Aorta (tissue), 5 donors: ENCODE measurements at regions of chr15 and their contacts with region 1.

Region 1: DNA sequence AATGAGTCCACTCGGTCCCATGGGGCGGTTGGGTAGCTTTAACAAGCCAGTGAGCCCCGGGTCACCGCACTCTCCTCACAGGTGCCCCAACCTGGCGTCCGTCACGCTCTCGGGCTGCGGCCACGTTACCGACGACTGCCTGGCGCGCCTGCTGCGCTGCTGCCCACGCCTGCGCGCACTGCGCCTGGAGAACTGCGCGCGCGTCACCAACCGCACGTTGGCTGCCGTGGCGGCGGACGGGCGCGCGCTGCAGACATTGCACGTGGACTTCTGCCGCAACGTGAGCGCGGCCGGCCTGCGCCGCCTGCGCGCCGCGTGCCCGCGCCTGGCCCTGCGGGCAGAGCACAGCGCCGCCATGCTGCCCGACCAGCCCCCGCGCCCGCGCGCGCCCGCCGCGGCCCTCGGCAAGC is 3.4 kb downstream of the FBXL22 start:
- DNase-seq: peak; percentile 95 to 96
- ATAC-seq: peak; percentile 81
- H3K4me3 ChIP-seq: peak overlapping the region; percentile 43 to 57
- H3K27ac ChIP-seq: peak overlapping the region; percentile 19 to 87
- H3K4me1 ChIP-seq: peaks cover 1 to 3% of the 10 kb centered on the region in 2 donors
- H3K27me3 ChIP-seq: no peaks in the 10 kb centered on the region

Region 2: DNA sequence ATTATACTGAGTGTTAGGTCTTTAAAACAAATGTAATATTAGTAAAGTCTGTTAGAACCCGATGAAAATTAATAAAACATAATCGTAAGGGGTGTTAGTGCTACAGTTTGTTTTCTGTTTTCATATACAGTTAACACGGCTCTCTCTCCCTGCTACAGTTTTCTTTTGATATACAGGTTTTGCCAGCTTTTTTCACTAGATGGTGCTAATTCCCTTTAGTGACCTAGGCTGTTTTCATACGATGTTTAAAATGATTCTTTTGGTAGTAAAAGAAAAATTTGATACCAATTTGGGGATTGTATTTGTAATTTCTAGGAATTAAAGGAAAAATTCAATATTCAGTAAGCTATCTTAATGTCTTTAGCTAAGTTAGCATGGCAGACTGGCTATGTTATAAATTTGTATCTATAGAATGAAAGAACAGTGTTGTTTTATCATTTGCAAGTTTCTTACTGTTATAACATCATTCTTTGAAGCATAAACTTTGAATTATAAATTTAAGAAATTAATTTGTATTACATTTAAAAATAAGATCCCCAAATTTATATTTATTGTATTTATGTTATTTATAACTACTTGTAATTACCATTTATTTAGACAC is 311.7 kb before region 1 on chr15:
- intact Hi-C with region 1: loop called in 1 of 2 experiments (anchors 5 kb)
- DNase-seq: no peak
- ATAC-seq: peak; percentile 86
- H3K4me3 ChIP-seq: no peak overlapping the region
- H3K27ac ChIP-seq: no peak overlapping the region
- H3K4me1 ChIP-seq: peaks cover 5 to 6% of the 10 kb centered on the region in 2 donors
- H3K27me3 ChIP-seq: no peaks in the 10 kb centered on the region

Region 3: DNA sequence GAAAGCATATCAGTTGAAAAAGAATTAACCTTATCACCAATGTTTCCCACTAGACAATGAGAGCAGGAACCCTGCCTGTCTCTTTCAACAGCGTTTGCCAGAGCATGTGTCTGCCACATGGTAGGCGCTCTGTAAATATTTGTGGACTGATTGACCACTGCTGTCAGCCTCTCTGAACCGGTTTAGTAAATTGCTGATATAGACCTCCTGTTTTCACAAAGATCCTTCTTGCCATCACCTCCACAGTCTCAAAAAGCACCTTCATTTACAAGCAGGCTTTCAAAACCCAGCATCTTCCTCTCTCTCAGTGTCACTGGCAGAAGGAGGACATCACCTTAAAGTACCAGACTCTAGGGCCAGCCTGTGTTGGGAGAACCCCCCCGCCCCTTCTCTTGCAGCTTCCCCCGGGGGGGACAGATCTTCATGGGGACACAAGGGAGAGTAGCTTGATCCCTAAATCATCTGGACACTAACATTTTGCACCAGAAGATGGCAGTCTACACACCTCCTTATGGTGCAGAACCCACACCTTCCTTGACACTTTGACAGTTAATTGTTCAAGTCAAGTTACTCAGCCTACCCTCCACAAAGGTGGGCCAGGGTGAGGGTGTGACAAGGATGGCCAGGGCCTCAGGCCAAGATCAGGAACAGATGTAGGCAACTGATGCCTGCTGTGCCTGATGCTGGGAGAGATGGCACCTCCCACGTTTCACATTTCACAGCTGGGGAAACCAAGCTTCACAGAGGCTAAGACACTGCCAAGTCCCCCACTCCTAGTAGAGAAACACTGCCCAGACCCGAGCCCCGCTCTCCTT is 134.0 kb before region 1 on chr15:
- intact Hi-C with region 1: loop called in 1 of 2 experiments (anchors 5 kb)
- DNase-seq: no peak
- ATAC-seq: peak; percentile 78
- H3K4me3 ChIP-seq: no peak overlapping the region
- H3K27ac ChIP-seq: no peak overlapping the region
- H3K4me1 ChIP-seq: no peaks in the 10 kb centered on the region
- H3K27me3 ChIP-seq: no peaks in the 10 kb centered on the region

Region 4: GRCh38 chr15:63487076-63487757 is 113.4 kb before region 1 on chr15:
- intact Hi-C with region 1: loop called in 1 of 2 experiments (anchors 2 kb)
- DNase-seq: peak; percentile 93 to 96
- ATAC-seq: peak; percentile 94
- H3K4me3 ChIP-seq: no peak overlapping the region
- H3K27ac ChIP-seq: no peak overlapping the region
- H3K4me1 ChIP-seq: no peaks in the 10 kb centered on the region
- H3K27me3 ChIP-seq: no peaks in the 10 kb centered on the region

Region 5: GRCh38 chr15:63504247-63504978 is 96.2 kb before region 1 on chr15 and contains the start of gene USP3:
- intact Hi-C with region 1: loop called (anchors 5 kb)
- DNase-seq: peak; percentile 97
- ATAC-seq: peak; percentile 95
- H3K4me3 ChIP-seq: peak within 1 kb of the TSS; percentile 89 to 93
- H3K27ac ChIP-seq: peak within 1 kb of the TSS; percentile 81 to 92
- H3K4me1 ChIP-seq: peaks cover 1 to 4% of the 10 kb centered on the region in 2 donors
- H3K27me3 ChIP-seq: no peaks in the 10 kb centered on the region
- total RNA-seq, gene USP3: 46.9 to 60.0 TPM